GM12878 (cell line): ENCODE measurements at regions of chr2 and their contacts with region 1.

Region 1: DNA sequence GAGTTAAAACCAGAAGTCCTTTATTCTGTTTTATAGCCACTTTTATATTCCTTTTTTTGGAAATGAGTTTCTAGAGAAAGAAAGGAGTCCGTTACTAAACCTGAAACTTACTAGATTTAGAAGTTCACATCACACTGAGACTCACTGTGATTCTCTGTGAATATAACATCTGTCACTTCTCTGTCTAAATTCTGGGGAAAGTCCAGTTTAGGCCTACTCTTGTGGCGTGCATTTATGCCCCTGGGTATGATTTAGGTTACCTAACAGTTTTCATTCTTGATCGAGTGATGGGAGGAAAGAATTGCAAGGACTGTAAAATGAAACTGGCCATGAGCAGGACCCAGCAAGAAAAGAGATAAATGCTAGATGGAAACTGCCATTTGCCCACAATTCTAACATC is 449.6 kb downstream of the SPAG16 start:
- DNase-seq: peak; percentile 59
- ATAC-seq: peak; percentile 98
- H3K4me3 ChIP-seq: no peak overlapping the region
- H3K27ac ChIP-seq: peak overlapping the region; percentile 75
- H3K4me1 ChIP-seq: peaks cover 7% of the 10 kb centered on the region
- H3K27me3 ChIP-seq: no peaks in the 10 kb centered on the region
- CTCF ChIP-seq: no peak
- EP300 ChIP-seq: peak; percentile 48 to 65; a peak in 1 of 4 replicates
- POLR2A ChIP-seq: no peak
- RAD21 ChIP-seq: no peak

Region 2: DNA sequence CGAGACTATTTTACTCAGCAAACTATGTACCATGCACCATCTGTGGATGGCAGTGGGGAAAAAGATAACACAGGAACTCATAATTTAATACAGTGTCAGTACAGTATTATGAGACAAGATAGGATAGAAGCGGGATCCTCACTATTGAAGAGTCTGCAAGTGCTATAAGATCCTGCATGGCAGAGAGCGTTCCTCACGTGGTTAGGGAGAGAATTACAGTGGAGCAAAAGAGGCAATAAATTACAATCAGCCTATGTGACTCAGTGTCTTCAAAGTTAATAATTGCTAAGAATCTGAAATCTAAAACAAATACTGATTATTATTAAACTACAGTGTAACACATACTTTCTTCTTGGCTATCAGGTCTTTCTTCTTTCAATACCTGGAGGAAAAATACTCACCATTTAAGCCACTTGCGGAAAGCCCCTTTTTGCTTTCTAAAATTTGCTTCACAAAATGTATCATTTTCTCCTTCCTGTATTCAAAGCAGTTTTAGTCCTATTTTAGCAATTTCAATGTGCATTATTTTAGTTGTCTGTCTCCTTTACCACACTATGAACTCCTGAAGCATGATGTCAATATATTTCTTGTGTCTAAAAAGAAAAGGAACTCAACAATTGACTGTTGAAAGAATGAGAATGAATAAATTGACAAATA is 106.7 kb before region 1 on chr2:
- CTCF ChIA-PET with region 1: no interaction called
- POLR2A ChIA-PET with region 1: no interaction called
- RAD21 ChIA-PET with region 1: no interaction called
- SMC1A ChIA-PET with region 1: no interaction called
- in situ Hi-C with region 1: no loop called
- intact Hi-C with region 1: loop called (anchors 5 kb)
- DNase-seq: peak; percentile 46
- ATAC-seq: peak; percentile 78
- H3K4me3 ChIP-seq: no peak overlapping the region
- H3K27ac ChIP-seq: peak overlapping the region; percentile 48
- H3K4me1 ChIP-seq: peaks cover 4% of the 10 kb centered on the region
- H3K27me3 ChIP-seq: no peaks in the 10 kb centered on the region
- CTCF ChIP-seq: no peak
- EP300 ChIP-seq: no peak
- POLR2A ChIP-seq: no peak
- RAD21 ChIP-seq: peak; percentile 4; the same call in 1 of the 2 replicates

Region 3: DNA sequence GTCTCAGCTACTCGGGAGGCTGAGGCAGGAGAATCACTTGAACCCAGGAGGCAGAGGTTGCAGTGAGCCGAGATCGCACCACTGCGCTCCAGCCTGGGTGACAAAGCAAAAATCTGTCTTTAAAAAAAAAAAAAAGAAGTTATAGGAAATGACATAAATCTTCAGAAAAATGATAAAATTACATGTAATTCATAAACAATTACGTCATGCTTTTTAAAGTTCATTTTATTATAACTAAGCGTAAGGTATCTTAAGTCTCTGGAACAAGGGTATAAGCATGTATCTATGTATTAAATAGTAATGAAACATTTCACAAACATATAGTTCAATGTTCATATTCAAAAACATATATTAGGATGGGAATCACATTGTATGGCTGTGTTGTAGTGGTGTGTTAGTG is 23.7 kb before region 1 on chr2:
- CTCF ChIA-PET with region 1: no interaction called
- POLR2A ChIA-PET with region 1: no interaction called
- RAD21 ChIA-PET with region 1: no interaction called
- SMC1A ChIA-PET with region 1: interaction called, 10 read pairs
- in situ Hi-C with region 1: no loop called
- intact Hi-C with region 1: no loop called
- DNase-seq: no peak
- ATAC-seq: no peak
- H3K4me3 ChIP-seq: no peak overlapping the region
- H3K27ac ChIP-seq: no peak overlapping the region
- H3K4me1 ChIP-seq: no peaks in the 10 kb centered on the region
- H3K27me3 ChIP-seq: no peaks in the 10 kb centered on the region
- CTCF ChIP-seq: no peak
- EP300 ChIP-seq: no peak
- POLR2A ChIP-seq: no peak
- RAD21 ChIP-seq: no peak